Astrocyte of the spinal cord (primary cell): ENCODE measurements at regions of chr6 and their contacts with region 1.

Region 1: GRCh38 chr6:72619883-72620696 is 1.8 kb upstream of the KCNQ5 start:
- DNase-seq: peak; percentile 44
- H3K4me3 ChIP-seq: peak overlapping the region; percentile 60
- CTCF ChIP-seq: no peak

Region 2: GRCh38 chr6:72999995-73000394 is 379.9 kb after region 1 on chr6:
- in situ Hi-C with region 1: no loop called
- DNase-seq: no peak
- H3K4me3 ChIP-seq: no peak overlapping the region
- CTCF ChIP-seq: no peak

Region 3: DNA sequence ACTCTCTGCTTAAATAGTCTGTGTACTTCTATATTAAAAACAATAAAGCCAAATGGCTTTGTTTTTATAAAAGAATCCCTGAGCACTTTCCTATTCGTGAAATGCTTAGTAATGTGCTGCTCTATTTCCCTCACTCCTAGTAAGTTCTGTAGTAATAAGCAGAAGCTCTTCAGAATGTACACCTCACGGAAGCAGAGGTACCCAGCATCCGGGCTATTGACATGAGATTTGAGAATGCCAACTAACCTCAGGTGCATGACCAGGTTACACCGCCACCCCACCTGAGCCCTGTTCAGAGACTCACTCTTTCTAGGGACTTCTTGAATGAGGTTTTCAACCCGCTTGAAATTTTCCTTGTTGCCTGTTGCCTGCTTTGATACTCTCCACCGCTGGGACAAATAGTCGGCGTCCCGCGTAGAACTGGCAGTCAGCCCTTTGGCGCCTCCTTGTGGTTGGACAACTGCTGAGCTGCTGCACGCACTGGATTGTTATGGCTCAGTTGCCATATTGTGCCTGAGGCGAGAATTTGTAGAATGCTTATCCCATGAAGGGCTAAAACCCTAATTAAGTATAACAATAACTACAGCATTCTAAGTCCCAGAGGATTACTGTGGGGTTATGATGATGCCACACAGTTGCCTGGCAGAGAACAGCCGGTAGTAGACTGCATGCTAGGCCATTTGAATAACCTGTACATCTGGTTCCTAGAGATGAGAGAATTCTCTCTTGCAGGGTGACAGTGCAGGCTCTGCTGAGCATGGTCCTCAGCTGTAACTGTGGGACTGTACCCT is 509.8 kb after region 1 on chr6:
- in situ Hi-C with region 1: loop called (anchors 10 kb)
- DNase-seq: peak; percentile 73
- H3K4me3 ChIP-seq: no peak overlapping the region
- CTCF ChIP-seq: peak; percentile 99